HEK293T (cell line): ENCODE measurements at regions of chr7 and their contacts with region 1.

Region 1: DNA sequence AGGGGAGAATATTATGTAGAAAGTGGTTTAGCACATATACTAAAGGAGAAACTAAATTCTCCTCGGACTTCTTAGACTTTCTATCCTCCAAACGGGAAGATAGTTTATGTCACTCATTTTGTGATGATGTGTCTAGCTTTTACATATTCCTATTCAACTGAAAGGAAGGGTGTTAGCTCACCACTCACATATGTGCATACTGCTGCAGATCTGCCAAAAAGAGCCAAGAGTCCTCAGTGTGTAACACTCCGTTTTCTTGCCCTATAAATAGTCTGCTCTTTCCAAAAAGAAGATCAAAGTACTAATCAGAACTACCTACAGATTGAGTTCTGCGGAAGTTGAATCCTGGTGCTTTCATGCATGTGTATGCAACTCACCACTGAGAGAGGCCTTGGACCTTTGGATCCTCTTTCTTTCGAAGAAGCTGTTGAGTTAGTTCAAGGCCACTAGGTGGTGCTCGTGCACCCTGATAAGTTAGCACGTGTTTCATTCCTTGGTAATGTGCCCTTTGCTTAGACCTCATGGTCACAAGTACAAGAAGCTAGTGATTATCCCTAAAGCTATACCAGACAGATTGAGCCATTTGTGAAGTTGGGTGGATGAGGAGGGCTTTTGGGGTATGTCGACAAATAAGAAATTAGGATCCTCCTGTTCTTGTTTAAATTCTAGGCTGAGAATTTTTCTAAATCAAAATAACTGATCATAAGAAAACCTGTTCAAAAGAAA is 14.1 kb downstream of the YAE1 start:
- DNase-seq: peak; percentile 77

Region 2: GRCh38 chr7:39073432-39073831 is 506.9 kb before region 1 on chr7:
- CTCF ChIA-PET with region 1: no interaction called
- POLR2A ChIA-PET with region 1: no interaction called
- DNase-seq: peak; percentile 22

Region 3: GRCh38 chr7:39566023-39566921 is 14.0 kb before region 1 on chr7 and contains the start of gene YAE1:
- CTCF ChIA-PET with region 1: interaction called, 3 read pairs
- POLR2A ChIA-PET with region 1: interaction called, 20 read pairs
- DNase-seq: peak; percentile 93

Region 4: GRCh38 chr7:39623018-39623731 is 42.9 kb after region 1 on chr7 and contains the start of gene RALA:
- CTCF ChIA-PET with region 1: interaction called, 6 read pairs
- POLR2A ChIA-PET with region 1: interaction called, 14 read pairs
- DNase-seq: peak; percentile 91

Region 5: GRCh38 chr7:39720574-39720973 is 140.3 kb after region 1 on chr7:
- CTCF ChIA-PET with region 1: interaction called, 10 read pairs
- POLR2A ChIA-PET with region 1: no interaction called
- DNase-seq: no peak

Region 6: DNA sequence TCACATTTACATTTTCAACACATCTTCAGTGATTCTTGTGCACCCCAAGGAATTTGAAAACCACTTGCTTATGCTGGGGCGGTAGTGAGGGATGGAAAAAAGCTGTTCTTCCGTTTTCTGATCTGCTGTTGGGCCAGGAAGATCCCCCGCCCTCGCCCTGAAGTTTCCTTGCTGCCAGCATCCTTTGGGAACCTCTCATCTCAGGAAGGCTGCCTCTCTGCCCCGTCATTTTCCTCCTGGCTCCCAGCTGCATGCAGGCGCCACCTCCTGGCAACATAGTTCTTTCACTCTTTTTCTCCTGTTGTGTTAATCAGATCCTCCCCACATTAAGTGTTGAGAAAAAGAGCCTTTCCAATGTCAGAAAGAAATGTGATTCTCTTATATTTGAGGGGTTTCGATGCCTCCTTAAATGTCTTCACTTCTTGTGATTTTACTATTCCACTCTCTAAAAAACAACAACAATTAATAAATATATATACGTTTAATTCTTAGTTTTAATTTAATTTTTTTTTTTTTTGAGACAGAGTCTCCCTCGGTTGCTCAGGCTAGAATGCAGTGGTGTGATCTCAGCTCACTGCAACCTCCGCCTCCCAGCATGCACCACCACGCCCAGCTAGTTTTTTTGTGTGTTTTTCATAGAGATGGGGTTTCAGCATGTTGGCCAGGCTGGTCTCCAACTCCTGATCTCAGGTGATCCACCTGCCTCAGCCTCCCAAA is 165.9 kb after region 1 on chr7:
- CTCF ChIA-PET with region 1: interaction called, 86 read pairs
- POLR2A ChIA-PET with region 1: interaction called, 6 read pairs
- DNase-seq: peak; percentile 77